ENCODE measurements at regions of chr10 and their contacts with region 1.

Region 1: DNA sequence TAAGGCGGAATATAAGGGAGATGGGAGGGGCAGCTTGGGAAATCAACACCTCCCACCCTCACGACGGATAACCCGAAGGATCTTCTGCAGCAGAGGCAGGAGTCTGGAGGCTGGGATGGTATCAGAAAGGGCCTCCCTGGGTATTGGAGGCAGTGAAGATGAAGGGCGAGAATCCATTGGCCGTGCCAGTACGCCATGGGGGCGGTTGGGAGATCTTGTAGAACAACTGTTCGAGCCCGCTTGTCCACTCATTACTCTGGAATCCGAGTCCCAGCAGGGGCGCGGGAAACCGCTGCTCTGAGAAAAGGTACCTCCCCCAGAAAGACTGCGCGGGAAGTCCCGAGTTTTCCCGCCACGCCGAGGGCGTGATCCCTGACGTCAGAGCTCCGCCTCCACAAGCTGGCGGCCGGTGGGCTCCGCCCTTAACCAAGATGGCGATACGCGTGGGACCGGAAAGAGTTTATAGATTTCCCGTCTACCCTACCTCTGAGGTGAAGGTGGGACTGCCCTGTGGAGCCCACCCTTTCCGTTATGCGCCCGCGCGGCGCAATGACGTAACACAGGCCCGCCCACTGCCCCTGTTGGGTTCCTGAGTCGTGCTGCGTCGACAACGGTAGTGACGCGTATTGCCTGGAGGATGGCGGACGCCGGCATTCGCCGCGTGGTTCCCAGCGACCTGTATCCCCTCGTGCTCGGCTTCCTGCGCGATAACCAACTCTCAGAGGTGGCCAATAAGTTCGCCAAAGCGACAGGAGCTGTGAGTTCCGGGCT is at the start of gene NOLC1:
- DNase-seq: peak; percentile 100
- ATAC-seq: peak; percentile 88 to 97 (median 88)
- H3K4me3 ChIP-seq: peak within 1 kb of the TSS; percentile 90
- H3K4me3 Mint-ChIP-seq: peak within 1 kb of the TSS; percentile 93
- H3K27ac ChIP-seq: peak within 1 kb of the TSS; percentile 97
- H3K27ac Mint-ChIP-seq: peak within 1 kb of the TSS; percentile 93 to 97
- H3K4me1 ChIP-seq: peaks cover 24% of the 10 kb centered on the region
- H3K4me1 Mint-ChIP-seq: peaks cover 20 to 31% of the 10 kb centered on the region in 2 donors
- H3K27me3 ChIP-seq: no peaks in the 10 kb centered on the region
- H3K27me3 Mint-ChIP-seq: no peaks in the 10 kb centered on the region
- CTCF ChIP-seq: no peak
- total RNA-seq, gene NOLC1: 42.6 to 47.5 (median 43.4) TPM

Region 2: GRCh38 chr10:102055647-102056419 is 96.1 kb before region 1 on chr10 and contains the start of gene ARMH3:
- intact Hi-C with region 1: loop called (anchors 1 kb)
- DNase-seq: peak; percentile 81 to 94
- ATAC-seq: peak; percentile 91 to 97 (median 94)
- H3K4me3 ChIP-seq: peak within 1 kb of the TSS; percentile 87
- H3K4me3 Mint-ChIP-seq: peak within 1 kb of the TSS; percentile 95
- H3K27ac ChIP-seq: peak within 1 kb of the TSS; percentile 85
- H3K27ac Mint-ChIP-seq: peak within 1 kb of the TSS; percentile 88 to 98
- H3K4me1 ChIP-seq: peaks cover 22% of the 10 kb centered on the region
- H3K4me1 Mint-ChIP-seq: peaks cover 29 to 33% of the 10 kb centered on the region in 2 donors
- H3K27me3 ChIP-seq: no peaks in the 10 kb centered on the region
- H3K27me3 Mint-ChIP-seq: no peaks in the 10 kb centered on the region
- CTCF ChIP-seq: no peak
- total RNA-seq, gene ARMH3: 29.9 to 38.9 (median 35.4) TPM

Region 3: DNA sequence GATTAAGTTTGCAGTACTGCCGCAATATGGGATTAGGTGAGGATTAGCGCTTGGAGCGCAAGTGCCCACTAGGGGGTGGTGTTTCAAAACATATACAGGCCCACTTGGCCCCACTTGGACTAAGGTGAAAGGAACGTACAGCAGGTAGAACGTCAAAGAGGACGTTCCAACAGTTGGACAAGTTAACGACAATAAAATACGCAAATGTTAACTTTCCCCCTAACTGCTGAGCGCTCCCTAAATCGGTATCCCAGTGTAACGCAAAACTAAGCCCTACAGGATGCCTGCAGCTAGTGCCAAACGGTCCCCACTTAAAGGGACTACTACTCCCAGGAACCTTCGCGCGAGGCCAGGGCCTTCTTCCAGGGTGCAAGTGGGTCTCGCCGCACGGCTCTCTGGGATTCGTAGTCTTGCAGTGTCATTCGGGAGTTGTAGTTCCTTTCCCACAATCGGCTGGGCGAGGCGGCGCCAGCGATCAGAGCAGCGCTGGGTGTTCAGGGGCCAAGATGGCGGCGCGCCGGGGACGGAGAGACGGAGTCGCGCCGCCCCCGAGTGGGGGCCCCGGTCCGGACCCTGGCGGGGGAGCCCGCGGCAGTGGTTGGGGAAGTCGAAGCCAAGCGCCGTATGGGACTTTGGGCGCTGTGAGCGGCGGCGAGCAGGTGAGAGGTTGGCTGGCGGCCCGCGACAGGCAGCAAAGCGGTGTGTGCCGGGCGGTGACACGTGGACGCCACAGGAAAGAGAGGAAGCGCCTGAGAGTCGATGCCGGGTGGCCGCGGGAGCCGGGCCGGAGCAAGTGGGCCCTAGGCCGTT is 19.2 kb before region 1 on chr10 and contains the start of gene PPRC1:
- intact Hi-C with region 1: loop called (anchors 1 kb)
- DNase-seq: peak; percentile 94 to 98
- ATAC-seq: peak; percentile 94 to 99 (median 96)
- H3K4me3 ChIP-seq: peak within 1 kb of the TSS; percentile 96
- H3K4me3 Mint-ChIP-seq: peak within 1 kb of the TSS; percentile 98
- H3K27ac ChIP-seq: peak within 1 kb of the TSS; percentile 86
- H3K27ac Mint-ChIP-seq: peak within 1 kb of the TSS; percentile 93 to 97
- H3K4me1 ChIP-seq: peaks cover 27% of the 10 kb centered on the region
- H3K4me1 Mint-ChIP-seq: peaks cover 33 to 37% of the 10 kb centered on the region in 2 donors
- H3K27me3 ChIP-seq: no peaks in the 10 kb centered on the region
- H3K27me3 Mint-ChIP-seq: no peaks in the 10 kb centered on the region
- CTCF ChIP-seq: peak; percentile 96
- total RNA-seq, gene PPRC1: 29.1 to 48.0 (median 37.7) TPM

Region 4: DNA sequence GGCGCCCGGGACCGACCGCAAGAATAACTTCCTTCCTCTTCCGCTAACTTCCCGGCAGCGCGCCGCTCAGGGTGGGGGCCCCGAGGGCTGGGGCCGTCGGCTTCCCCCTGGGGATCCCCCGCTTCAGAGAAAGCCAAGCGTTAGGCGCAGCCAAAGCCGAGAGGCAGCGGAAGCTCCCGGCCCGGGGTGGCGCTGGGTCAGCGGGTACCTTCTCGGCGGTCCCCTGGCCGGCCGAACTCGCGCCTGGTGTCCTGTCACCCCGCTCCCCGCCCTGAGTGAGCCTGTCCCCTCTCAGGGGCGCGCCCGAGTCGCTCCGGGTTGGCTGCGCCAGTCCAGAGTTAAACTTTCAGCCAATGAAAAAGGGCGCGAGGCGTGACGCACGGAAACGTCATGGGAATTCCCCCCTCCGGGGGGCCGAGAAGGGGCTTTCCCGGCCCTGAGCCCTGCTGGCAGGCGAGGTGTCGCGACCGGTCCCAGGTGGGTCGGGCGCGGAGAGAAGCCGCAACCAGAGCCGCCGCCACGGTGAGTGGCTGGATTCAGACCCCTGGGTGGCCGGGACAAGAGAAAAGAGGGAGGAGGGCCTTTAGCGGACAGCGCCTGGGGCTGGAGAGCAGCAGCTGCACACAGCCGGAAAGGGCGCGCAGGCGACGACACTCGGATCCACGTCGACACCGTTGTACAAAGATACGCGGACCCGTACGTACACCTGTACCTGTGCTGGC is 242.3 kb after region 1 on chr10:
- intact Hi-C with region 1: loop called (anchors 1 kb)
- DNase-seq: peak; percentile 99 to 100
- ATAC-seq: peak; percentile 74 to 91 (median 80)
- H3K4me3 ChIP-seq: peak overlapping the region; percentile 69
- H3K4me3 Mint-ChIP-seq: peak overlapping the region; percentile 98
- H3K27ac ChIP-seq: peak overlapping the region; percentile 91
- H3K27ac Mint-ChIP-seq: peak overlapping the region; percentile 99
- H3K4me1 ChIP-seq: peaks cover 40% of the 10 kb centered on the region
- H3K4me1 Mint-ChIP-seq: peaks cover 34 to 43% of the 10 kb centered on the region in 2 donors
- H3K27me3 ChIP-seq: no peaks in the 10 kb centered on the region
- H3K27me3 Mint-ChIP-seq: peaks cover 0 to 4% of the 10 kb centered on the region in 2 donors
- CTCF ChIP-seq: peak; percentile 31

Region 5: DNA sequence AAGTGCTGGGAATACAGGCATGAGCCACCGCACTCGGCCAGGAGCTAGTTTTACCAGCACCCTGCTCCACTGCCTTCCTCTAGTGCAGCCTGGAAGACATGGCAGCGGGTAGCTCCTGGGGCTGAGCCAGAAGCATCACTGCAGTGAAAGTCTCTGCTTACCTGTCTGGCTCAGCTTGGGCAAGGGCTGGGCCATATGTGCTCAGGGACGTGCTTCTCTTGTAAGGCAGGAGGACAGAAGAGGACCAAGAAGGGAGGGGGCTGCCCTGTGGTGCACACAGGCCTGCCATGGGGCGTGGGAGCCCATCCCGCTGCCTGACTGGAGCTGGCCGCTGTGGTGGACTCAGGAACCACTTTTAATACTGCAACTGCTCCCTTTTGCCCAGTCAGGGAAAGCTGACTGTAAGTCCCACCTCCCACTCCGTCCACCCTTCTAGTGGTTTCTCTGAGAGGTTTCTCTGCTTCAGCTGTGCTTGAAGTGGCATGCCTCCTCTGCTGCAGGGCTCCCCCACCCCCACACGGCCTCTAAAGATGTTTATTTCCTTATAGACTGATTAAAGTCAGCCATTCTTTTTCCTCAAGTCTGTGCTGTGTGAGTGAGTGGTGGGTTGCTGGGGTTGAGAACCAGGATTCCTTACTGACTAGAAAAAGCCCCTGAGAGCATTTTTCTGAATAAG is 324.6 kb after region 1 on chr10:
- intact Hi-C with region 1: loop called (anchors 10 kb)
- DNase-seq: peak in 1 of 2 donors; percentile 54
- ATAC-seq: no peak
- H3K4me3 ChIP-seq: no peak overlapping the region
- H3K4me3 Mint-ChIP-seq: no peak overlapping the region
- H3K27ac ChIP-seq: no peak overlapping the region
- H3K27ac Mint-ChIP-seq: peak overlapping the region in 1 of 2 donors; percentile 36
- H3K4me1 ChIP-seq: peaks cover 14% of the 10 kb centered on the region
- H3K4me1 Mint-ChIP-seq: peaks cover 6 to 15% of the 10 kb centered on the region in 2 donors
- H3K27me3 ChIP-seq: no peaks in the 10 kb centered on the region
- H3K27me3 Mint-ChIP-seq: no peaks in the 10 kb centered on the region
- CTCF ChIP-seq: no peak

Region 6: GRCh38 chr10:103564776-103565520 is 1413.0 kb after region 1 on chr10:
- intact Hi-C with region 1: no loop called
- DNase-seq: peak in 1 of 2 donors; percentile 38
- ATAC-seq: no peak
- H3K4me3 ChIP-seq: no peak overlapping the region
- H3K4me3 Mint-ChIP-seq: no peak overlapping the region
- H3K27ac ChIP-seq: no peak overlapping the region
- H3K27ac Mint-ChIP-seq: no peak overlapping the region
- H3K4me1 ChIP-seq: no peaks in the 10 kb centered on the region
- H3K4me1 Mint-ChIP-seq: peaks cover 0 to 5% of the 10 kb centered on the region in 2 donors
- H3K27me3 ChIP-seq: no peaks in the 10 kb centered on the region
- H3K27me3 Mint-ChIP-seq: peaks cover 0 to 6% of the 10 kb centered on the region in 2 donors
- CTCF ChIP-seq: peak; percentile 36